Endothelial cell of umbilical vein (primary cell): ENCODE measurements at regions of chr18 and their contacts with region 1.

Region 1: GRCh38 chr18:36296650-36297416 is 680 bp upstream of the FHOD3 start:
- DNase-seq: peak; percentile 68
- H3K4me3 ChIP-seq: peak overlapping the region in 2 of 3 experiments; percentile 28 to 34
- H3K27ac ChIP-seq: no peak overlapping the region
- H3K4me1 ChIP-seq: peaks cover 10% of the 10 kb centered on the region
- H3K27me3 ChIP-seq: peaks cover 39 to 52% of the 10 kb centered on the region in 2 experiments
- CTCF ChIP-seq: peak; percentile 35 to 50
- POLR2A ChIP-seq: no peak

Region 2: DNA sequence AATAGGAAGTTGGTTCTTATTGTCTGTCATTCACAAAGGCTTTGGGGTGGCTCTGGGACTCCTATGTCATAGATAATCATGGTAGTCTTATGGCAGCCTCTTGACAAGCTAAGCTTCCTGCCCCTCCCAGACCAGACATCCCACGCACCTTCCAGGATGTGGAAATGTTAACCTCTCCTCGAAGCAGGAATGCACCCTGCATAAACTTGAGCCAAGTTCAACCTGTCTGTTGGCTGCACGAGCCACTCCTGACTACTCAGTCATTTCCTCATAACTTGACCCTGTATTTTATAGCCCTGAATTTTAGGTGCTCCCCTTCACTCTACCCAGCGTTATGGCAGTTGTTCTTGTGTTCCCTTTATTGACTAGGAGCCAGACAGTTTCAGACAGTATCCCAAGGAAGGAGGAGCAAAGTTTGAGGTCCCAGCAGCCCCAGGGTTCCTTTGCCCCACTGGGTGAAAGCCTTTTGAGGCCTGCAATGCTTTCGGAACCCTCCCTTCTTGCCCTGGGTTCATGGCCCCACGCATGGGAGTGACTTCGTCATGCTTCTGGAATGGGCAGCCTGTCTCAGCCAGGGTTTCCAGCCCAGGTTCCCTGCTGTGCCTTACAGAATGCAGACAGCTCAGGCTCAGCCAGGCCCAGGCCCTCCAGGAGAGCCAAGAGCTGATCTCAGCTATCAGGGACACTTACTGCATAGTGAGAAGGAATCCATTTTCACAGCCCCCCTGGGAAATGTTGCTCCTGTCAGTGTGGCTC is 783.5 kb before region 1 on chr18:
- CTCF ChIA-PET with region 1: no interaction called
- POLR2A ChIA-PET with region 1: no interaction called
- dilution Hi-C with region 1: no loop called
- intact Hi-C with region 1: no loop called
- DNase-seq: no peak
- H3K4me3 ChIP-seq: no peak overlapping the region
- H3K27ac ChIP-seq: no peak overlapping the region
- H3K4me1 ChIP-seq: no peaks in the 10 kb centered on the region
- H3K27me3 ChIP-seq: no peaks in the 10 kb centered on the region
- CTCF ChIP-seq: no peak
- POLR2A ChIP-seq: no peak

Region 3: DNA sequence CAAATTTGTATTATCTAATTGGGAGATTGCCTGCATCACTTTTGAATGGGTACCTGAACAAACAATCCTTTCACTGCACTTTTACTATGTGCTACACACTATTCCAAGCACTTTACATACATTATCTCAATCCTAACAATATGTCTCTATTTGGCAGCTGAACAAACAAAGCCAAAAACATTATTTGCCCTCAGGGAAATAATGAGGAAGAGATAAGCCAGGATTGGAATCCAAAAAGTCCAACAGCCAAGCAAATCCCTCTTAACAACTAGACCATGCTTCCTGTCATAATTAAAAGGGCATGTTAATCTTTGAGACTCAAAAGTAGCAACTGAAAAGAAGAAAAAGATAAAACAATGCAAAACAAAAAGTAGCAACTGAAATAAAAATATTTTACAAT is 261.6 kb before region 1 on chr18:
- CTCF ChIA-PET with region 1: no interaction called
- POLR2A ChIA-PET with region 1: no interaction called
- dilution Hi-C with region 1: no loop called
- intact Hi-C with region 1: loop called (anchors 5 kb)
- DNase-seq: peak; percentile 94
- H3K4me3 ChIP-seq: no peak overlapping the region
- H3K27ac ChIP-seq: no peak overlapping the region
- H3K4me1 ChIP-seq: peaks cover 22% of the 10 kb centered on the region
- H3K27me3 ChIP-seq: no peaks in the 10 kb centered on the region
- CTCF ChIP-seq: no peak
- POLR2A ChIP-seq: peak; percentile 71

Region 4: DNA sequence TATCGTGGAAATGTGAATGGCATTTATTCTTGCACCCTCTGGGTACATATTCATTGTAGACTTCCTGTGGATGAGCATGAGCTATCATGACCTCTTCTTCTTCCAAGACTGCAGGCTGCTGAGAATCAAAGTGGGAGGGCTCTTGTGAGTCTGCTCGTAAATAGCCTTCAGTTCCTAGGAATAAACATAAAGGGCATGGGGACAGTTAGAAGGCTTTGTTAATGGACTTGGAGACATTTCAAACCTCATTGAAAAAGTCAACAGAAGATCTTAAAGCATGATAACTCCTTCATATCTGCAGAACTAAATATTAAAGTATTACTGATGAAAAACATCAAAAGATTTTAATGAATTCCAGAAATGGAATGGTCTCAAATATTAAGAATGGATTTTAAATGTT is 182.5 kb before region 1 on chr18:
- CTCF ChIA-PET with region 1: no interaction called
- POLR2A ChIA-PET with region 1: no interaction called
- dilution Hi-C with region 1: no loop called
- intact Hi-C with region 1: no loop called
- DNase-seq: no peak
- H3K4me3 ChIP-seq: no peak overlapping the region
- H3K27ac ChIP-seq: no peak overlapping the region
- H3K4me1 ChIP-seq: no peaks in the 10 kb centered on the region
- H3K27me3 ChIP-seq: no peaks in the 10 kb centered on the region
- CTCF ChIP-seq: no peak
- POLR2A ChIP-seq: no peak

Region 5: GRCh38 chr18:36186911-36187834 is 109.7 kb before region 1 on chr18 and contains the start of gene MOCOS:
- CTCF ChIA-PET with region 1: no interaction called
- POLR2A ChIA-PET with region 1: no interaction called
- dilution Hi-C with region 1: no loop called
- intact Hi-C with region 1: loop called (anchors 5 kb)
- DNase-seq: peak; percentile 39
- H3K4me3 ChIP-seq: peak within 1 kb of the TSS; percentile 49 to 79 (median 59)
- H3K27ac ChIP-seq: no peak within 1 kb of the TSS
- H3K4me1 ChIP-seq: peaks cover 4% of the 10 kb centered on the region
- H3K27me3 ChIP-seq: peaks cover 0 to 8% of the 10 kb centered on the region in 2 experiments
- CTCF ChIP-seq: no peak
- POLR2A ChIP-seq: no peak
- total RNA-seq, gene MOCOS: 0.85 and 0.88 TPM in 2 replicates

Region 6: DNA sequence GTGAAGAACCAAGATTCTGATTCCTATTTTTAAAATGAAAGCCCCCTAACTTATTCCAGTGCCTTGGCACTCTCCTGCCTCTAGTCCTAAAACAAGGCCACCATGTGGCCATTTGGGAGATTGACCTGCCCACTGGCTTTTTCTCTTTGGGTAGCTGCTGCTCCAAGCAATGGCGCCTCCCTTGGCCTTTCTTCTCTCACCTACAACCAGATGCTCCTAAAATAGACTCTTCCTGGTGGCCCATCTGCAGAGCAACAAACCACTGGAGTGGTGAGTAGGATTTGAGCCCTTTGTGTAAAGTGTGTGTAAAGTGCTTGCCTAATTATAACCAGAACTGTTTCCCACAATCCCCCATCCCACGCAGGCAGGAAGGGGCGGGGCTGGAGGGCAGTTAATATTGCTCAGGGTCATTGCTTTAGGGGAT is 114.9 kb after region 1 on chr18:
- CTCF ChIA-PET with region 1: interaction called, 22 read pairs
- POLR2A ChIA-PET with region 1: no interaction called
- dilution Hi-C with region 1: no loop called
- intact Hi-C with region 1: loop called (anchors 1 kb)
- DNase-seq: no peak
- H3K4me3 ChIP-seq: no peak overlapping the region
- H3K27ac ChIP-seq: no peak overlapping the region
- H3K4me1 ChIP-seq: no peaks in the 10 kb centered on the region
- H3K27me3 ChIP-seq: no peaks in the 10 kb centered on the region
- CTCF ChIP-seq: peak; percentile 13 to 24
- POLR2A ChIP-seq: no peak

Region 7: DNA sequence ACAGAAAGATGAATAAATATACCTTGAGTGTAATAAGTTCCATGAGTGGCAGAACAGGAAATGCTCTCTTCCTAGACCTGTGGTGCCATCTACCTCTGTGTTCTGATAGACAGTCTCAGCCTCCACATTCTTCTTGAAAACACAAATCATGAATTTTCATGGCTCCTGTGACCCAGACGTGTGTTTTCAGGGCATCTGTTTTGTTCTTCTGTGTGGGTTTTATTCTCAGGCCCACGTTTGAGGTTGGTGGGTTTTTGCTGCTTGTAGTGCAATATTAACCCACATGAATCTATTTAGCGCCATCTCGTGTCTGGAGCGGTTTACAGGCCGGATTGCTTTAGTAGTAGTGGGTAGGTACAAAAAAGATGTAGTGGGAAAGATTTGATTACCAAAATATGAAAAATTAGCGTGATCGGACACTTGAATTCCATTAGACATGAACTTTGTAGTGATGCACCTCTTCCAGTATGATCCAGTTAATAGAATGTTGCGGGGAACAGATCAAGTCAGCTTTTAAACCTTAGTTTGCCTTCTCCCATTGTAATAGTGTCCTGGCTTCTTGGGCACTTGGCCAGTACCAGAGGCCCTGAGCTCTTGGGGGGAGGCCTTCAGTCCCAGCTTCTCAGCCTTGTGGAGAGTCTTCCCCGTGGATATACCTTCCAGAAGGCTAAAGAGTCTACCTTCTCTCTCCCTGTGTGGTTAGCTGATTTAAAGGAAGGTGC is 275.5 kb after region 1 on chr18:
- CTCF ChIA-PET with region 1: interaction called, 5 read pairs
- POLR2A ChIA-PET with region 1: no interaction called
- dilution Hi-C with region 1: no loop called
- intact Hi-C with region 1: loop called (anchors 5 kb)
- DNase-seq: peak; percentile 44
- H3K4me3 ChIP-seq: no peak overlapping the region
- H3K27ac ChIP-seq: no peak overlapping the region
- H3K4me1 ChIP-seq: no peaks in the 10 kb centered on the region
- H3K27me3 ChIP-seq: peaks cover 2 to 4% of the 10 kb centered on the region in 2 experiments
- CTCF ChIP-seq: peak; percentile 39 to 43
- POLR2A ChIP-seq: no peak

Region 8: DNA sequence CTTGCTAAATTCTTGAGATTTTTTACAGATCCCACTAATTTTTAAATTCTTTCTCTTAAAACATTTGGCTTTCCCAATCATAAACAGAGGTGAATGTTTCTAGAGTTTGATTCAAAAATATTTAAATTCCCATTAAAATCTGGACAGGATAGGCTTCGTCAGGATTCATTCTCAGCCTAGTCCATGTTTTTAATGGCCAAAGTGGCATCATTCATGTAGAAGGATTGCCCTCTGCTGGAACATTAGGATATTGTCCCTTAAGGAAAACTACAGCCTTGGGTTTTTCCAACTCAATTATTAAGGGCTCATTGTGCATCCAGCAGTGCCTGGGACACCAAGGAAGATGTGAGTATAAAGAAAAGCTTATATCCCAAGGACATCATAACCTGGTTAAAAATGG is 460.2 kb after region 1 on chr18:
- CTCF ChIA-PET with region 1: no interaction called
- POLR2A ChIA-PET with region 1: no interaction called
- dilution Hi-C with region 1: no loop called
- intact Hi-C with region 1: loop called (anchors 10 kb)
- DNase-seq: peak; percentile 50
- H3K4me3 ChIP-seq: no peak overlapping the region
- H3K27ac ChIP-seq: no peak overlapping the region
- H3K4me1 ChIP-seq: no peaks in the 10 kb centered on the region
- H3K27me3 ChIP-seq: no peaks in the 10 kb centered on the region
- CTCF ChIP-seq: peak; percentile 40 to 54
- POLR2A ChIP-seq: no peak